Left ventricle myocardium superior (tissue), 1 donor: ENCODE measurements at regions of chr13 and their contacts with region 1.

Region 1: DNA sequence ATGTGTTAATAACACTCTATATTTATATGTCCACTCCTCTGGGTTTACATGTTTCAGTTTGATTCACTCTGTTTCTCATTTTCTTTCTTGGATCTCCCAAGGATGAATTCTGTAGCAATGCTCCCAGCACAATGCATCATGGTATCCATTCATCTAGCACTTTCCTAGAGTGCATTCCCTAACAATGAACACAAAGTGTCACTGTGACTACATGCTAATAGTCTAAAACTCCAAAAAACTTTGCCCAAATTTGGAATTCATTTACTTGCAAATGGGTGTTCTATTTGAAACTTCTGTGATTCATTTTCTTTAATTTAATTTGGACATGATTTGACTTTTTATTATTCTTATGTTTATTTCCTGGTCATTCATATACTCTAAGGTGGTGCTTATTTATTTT is 286.3 kb downstream of the POU4F1 start:
- DNase-seq: no peak
- ATAC-seq: peak; percentile 32

Region 2: DNA sequence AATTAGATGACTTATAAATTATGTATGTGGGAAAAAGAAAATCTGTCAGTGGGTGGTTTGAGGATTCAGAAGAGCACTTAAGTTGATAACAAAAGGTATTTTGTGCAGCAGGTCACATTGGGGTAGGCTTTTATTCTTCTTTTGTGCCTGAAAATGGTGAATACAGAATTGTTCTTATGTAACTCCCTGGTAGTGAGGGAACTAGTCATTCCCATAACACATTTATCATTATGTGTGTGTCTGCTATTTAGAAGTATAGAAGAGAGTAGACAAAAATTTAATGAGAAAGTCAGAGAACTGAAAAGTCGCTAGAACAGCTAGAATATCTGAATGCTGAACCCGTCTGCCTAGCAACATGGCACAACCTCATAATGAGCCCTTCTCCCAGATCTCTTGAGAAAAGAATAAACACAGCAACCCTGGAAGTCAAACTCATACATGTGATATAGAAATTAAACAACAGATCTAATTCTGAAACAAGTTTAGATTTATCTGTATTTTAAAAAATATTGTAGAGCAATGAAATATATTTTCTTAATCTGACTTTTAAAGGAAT is 286.6 kb before region 1 on chr13:
- intact Hi-C with region 1: no loop called
- DNase-seq: no peak
- ATAC-seq: no peak

Region 3: GRCh38 chr13:78689011-78689410 is 372.0 kb after region 1 on chr13:
- intact Hi-C with region 1: loop called (anchors 5 kb)
- DNase-seq: no peak
- ATAC-seq: no peak